Activated B cell treated with CpG ODN at 0.5 μM for 24 hours (primary cell): ENCODE measurements at regions of chr10 and their contacts with region 1.

Region 1: DNA sequence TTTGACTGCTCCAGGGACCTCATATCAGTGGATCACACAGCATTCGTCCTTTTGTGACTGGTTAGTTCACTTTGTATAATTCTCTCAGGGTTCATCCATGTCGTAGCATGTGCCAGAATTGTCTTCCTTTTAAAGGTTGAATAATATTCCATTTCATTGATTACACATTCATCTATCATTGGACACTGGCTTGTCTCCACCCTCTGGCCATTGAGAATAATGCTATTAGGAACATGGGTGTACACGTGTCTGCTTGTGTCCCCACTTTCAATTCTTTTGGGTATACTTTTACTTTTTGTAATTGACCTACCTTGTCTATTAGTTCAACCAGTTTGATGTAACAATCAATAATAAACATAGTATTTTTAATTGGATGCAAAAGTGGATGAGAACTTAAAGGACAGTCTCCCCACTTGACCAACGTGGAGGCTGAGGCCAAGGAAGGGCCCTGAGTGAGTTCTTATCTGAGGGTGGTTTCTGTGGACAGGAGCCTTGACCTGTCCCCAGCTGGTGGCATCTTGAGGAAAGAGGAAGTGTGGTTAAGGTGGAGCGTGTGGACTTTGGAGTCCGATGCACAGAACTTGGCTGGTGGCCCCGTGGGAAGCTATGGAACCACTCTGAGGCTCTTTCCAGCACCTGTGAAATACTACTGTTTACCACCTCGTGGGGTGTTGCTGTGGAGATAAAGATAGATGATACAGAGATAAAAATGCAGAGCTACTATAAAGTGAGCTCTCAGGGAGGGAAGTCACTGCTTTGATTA is 16.6 kb downstream of the WDFY4 start:
- DNase-seq: no peak
- ATAC-seq: peak; percentile 44
- H3K4me3 Mint-ChIP-seq: peak overlapping the region; percentile 26
- H3K27ac Mint-ChIP-seq: peak overlapping the region; percentile 80
- H3K4me1 Mint-ChIP-seq: peaks cover 98% of the 10 kb centered on the region
- H3K27me3 Mint-ChIP-seq: no peaks in the 10 kb centered on the region
- CTCF ChIP-seq: no peak

Region 2: DNA sequence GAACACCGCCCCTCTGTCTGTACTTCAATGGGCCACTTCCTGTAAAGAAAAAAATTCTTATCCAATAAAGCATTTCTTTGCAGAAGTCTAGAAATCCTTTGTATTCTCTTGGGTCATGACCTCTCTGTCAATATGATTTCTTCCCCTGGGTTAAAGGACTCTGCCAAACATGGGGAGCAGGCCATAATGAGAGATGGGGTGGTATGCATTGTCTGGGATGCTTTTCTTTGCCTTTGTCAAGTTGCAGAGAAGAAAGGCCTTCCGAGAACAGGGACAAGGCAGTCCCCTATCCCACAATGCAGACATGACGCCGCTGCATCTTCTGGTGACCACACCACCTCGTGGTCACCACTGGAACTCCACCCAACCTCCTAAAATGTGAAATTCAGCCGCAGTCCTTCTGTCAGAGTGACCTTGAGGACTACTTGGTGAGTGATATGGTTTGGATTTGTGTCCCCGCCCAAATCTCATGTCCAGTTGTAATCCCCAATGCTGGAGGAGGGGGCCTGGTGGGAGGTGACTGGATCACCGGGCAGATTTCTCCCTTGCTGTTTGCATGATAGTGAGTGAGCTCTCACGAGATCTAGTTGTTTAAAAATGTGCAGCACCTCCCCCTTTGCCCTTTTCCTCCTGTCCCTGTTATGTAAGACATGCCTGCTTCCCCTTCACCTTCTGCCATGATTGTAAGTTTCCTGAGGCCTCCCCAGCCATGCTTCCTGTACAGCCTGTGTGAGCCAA is 411.6 kb before region 1 on chr10:
- CTCF ChIA-PET with region 1: no interaction called
- POLR2A ChIA-PET with region 1: no interaction called
- intact Hi-C with region 1: no loop called
- DNase-seq: peak; percentile 47
- ATAC-seq: peak; percentile 78
- H3K4me3 Mint-ChIP-seq: no peak overlapping the region
- H3K27ac Mint-ChIP-seq: no peak overlapping the region
- H3K4me1 Mint-ChIP-seq: peaks cover 18% of the 10 kb centered on the region
- H3K27me3 Mint-ChIP-seq: no peaks in the 10 kb centered on the region
- CTCF ChIP-seq: peak; percentile 31

Region 3: GRCh38 chr10:48684792-48685623 is 16.3 kb before region 1 on chr10 and contains the start of gene WDFY4:
- CTCF ChIA-PET with region 1: interaction called, 11 read pairs
- POLR2A ChIA-PET with region 1: interaction called, 22 read pairs
- intact Hi-C with region 1: loop called (anchors 1 kb)
- DNase-seq: peak; percentile 68
- ATAC-seq: peak; percentile 78
- H3K4me3 Mint-ChIP-seq: peak within 1 kb of the TSS; percentile 94
- H3K27ac Mint-ChIP-seq: peak within 1 kb of the TSS; percentile 98
- H3K4me1 Mint-ChIP-seq: peaks cover 79% of the 10 kb centered on the region
- H3K27me3 Mint-ChIP-seq: no peaks in the 10 kb centered on the region
- CTCF ChIP-seq: no peak
- total RNA-seq, gene WDFY4: 480 and 488 TPM in 2 replicates

Region 4: GRCh38 chr10:48714088-48714487 is 12.8 kb after region 1 on chr10:
- CTCF ChIA-PET with region 1: interaction called, 3 read pairs
- POLR2A ChIA-PET with region 1: interaction called, 3 read pairs
- intact Hi-C with region 1: loop called (anchors 2 kb)
- DNase-seq: no peak
- ATAC-seq: no peak
- H3K4me3 Mint-ChIP-seq: no peak overlapping the region
- H3K27ac Mint-ChIP-seq: no peak overlapping the region
- H3K4me1 Mint-ChIP-seq: peaks cover 66% of the 10 kb centered on the region
- H3K27me3 Mint-ChIP-seq: no peaks in the 10 kb centered on the region
- CTCF ChIP-seq: no peak

Region 5: GRCh38 chr10:48802611-48803071 is 101.3 kb after region 1 on chr10:
- CTCF ChIA-PET with region 1: no interaction called
- POLR2A ChIA-PET with region 1: no interaction called
- intact Hi-C with region 1: loop called (anchors 5 kb)
- DNase-seq: no peak
- ATAC-seq: peak; percentile 75
- H3K4me3 Mint-ChIP-seq: peak overlapping the region; percentile 44
- H3K27ac Mint-ChIP-seq: peak overlapping the region; percentile 92
- H3K4me1 Mint-ChIP-seq: peaks cover 78% of the 10 kb centered on the region
- H3K27me3 Mint-ChIP-seq: no peaks in the 10 kb centered on the region
- CTCF ChIP-seq: no peak